ENCODE measurements at regions of chr15 and their contacts with region 1.

Region 1: GRCh38 chr15:88620995-88621772 is at the start of gene AEN:
- DNase-seq: peak; percentile 95
- ATAC-seq: peak; percentile 88
- H3K4me3 Mint-ChIP-seq: peak within 1 kb of the TSS; percentile 85
- H3K27ac Mint-ChIP-seq: peak within 1 kb of the TSS; percentile 89
- H3K4me1 Mint-ChIP-seq: peaks cover 35% of the 10 kb centered on the region
- H3K27me3 Mint-ChIP-seq: peaks cover 3% of the 10 kb centered on the region
- CTCF ChIP-seq: no peak
- total RNA-seq, gene AEN: 55.2 to 58.4 TPM

Region 2: DNA sequence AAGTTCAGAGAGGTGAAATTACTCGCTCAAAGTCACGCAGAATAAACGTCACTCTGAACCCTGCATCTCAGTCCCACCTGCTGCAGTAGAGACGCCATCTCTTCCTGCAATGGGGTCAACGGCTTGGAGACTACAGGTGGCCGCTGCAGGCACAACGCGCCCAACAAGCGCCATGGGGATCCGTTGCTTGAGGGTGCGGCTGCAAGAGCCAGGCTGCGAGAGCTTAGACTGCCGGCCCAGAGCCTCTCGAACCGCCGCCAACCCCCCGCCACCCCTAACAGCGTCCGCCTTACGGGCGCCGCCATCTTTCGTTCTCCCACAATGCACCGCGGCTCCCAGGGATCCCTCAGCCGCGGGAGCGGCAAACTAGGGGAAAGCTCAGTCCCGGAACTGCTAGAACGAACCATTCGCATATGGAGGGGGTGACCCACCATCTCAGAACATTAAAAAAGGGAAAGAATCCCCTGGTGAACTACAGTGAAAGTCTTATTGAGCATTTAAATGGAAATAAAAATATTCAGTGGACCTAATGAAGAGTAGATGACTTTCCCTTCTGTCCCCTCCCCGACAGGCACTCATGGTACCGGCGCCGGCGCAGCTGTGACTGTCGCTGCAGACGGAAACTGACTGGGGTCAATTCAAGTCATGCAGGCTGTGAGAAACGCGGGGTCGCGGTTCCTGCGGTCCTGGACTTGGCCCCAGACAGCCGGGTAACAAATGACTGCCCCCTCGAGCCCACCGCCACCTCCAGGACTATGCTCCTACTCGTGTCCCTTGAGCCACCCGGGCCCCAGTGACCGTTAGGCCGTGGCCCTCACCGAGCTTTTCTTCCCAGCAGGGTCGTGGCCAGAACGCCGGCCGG is 153.9 kb before region 1 on chr15 and contains the starts of genes MRPL46 and MRPS11:
- CTCF ChIA-PET with region 1: interaction called, 3 read pairs
- POLR2A ChIA-PET with region 1: interaction called, 5 read pairs
- intact Hi-C with region 1: loop called (anchors 5 kb)
- DNase-seq: peak; percentile 92
- ATAC-seq: peak; percentile 90
- H3K4me3 Mint-ChIP-seq: peak within 1 kb of the TSS; percentile 90
- H3K27ac Mint-ChIP-seq: peak within 1 kb of the TSS; percentile 99
- H3K4me1 Mint-ChIP-seq: peaks cover 34% of the 10 kb centered on the region
- H3K27me3 Mint-ChIP-seq: no peaks in the 10 kb centered on the region
- CTCF ChIP-seq: no peak
- total RNA-seq, gene MRPL46: 34.4 to 35.0 TPM
- total RNA-seq, gene MRPS11: 54.3 to 55.4 TPM

Region 3: GRCh38 chr15:88546248-88547129 is 74.7 kb before region 1 on chr15 and contains the start of gene DET1:
- CTCF ChIA-PET with region 1: no interaction called
- POLR2A ChIA-PET with region 1: no interaction called
- intact Hi-C with region 1: loop called (anchors 5 kb)
- DNase-seq: peak; percentile 98
- ATAC-seq: peak; percentile 97
- H3K4me3 Mint-ChIP-seq: peak within 1 kb of the TSS; percentile 87
- H3K27ac Mint-ChIP-seq: peak within 1 kb of the TSS; percentile 94
- H3K4me1 Mint-ChIP-seq: peaks cover 14% of the 10 kb centered on the region
- H3K27me3 Mint-ChIP-seq: no peaks in the 10 kb centered on the region
- CTCF ChIP-seq: peak; percentile 74
- total RNA-seq, gene DET1: 2.1 to 2.6 TPM

Region 4: GRCh38 chr15:88603885-88604284 is 17.3 kb before region 1 on chr15:
- CTCF ChIA-PET with region 1: no interaction called
- POLR2A ChIA-PET with region 1: no interaction called
- intact Hi-C with region 1: no loop called
- DNase-seq: no peak
- ATAC-seq: no peak
- H3K4me3 Mint-ChIP-seq: no peak overlapping the region
- H3K27ac Mint-ChIP-seq: no peak overlapping the region
- H3K4me1 Mint-ChIP-seq: peaks cover 16% of the 10 kb centered on the region
- H3K27me3 Mint-ChIP-seq: peaks cover 52% of the 10 kb centered on the region
- CTCF ChIP-seq: no peak

Region 5: DNA sequence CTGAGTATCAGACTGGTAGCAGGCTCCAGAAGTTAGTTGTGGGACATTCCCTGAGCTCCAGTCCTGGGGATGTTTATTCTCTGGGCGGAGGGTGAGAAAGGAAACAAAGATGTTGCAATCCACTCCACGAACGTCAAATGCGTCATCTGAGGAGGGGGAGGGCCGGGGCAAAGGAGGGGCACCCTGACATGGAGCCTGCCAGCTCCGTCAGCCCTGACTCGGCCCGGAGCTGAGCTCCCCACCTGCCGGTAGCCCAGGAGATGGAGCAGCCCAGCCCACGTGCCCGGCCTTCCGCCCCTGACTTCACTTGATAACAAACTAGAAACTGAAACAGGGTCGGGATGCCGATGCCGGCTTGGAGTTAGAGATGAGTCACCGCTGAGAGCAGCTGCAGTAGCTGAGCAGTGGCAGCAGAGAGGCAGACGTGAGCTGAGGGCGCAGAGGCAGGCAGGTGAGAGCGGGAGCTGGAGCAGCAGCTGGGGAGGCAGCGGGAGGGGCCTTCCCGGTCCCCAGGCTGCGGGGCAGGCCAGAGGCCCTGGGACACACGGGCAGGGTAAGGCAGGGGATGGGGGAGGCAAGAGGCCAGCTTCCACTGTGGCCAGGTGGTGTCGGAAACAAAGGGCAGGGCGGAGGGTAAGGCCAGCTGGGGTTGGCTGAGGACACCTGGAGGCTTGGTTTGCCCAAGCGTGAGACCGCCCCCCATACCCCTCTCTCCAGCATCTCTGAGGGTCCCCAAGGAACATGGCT is 17.6 kb after region 1 on chr15 and contains the start of gene ISG20:
- CTCF ChIA-PET with region 1: interaction called, 30 read pairs
- POLR2A ChIA-PET with region 1: interaction called, 16 read pairs
- intact Hi-C with region 1: no loop called
- DNase-seq: peak; percentile 99
- ATAC-seq: peak; percentile 82
- H3K4me3 Mint-ChIP-seq: peak within 1 kb of the TSS; percentile 82
- H3K27ac Mint-ChIP-seq: peak within 1 kb of the TSS; percentile 96
- H3K4me1 Mint-ChIP-seq: peaks cover 81% of the 10 kb centered on the region
- H3K27me3 Mint-ChIP-seq: no peaks in the 10 kb centered on the region
- CTCF ChIP-seq: peak; percentile 47
- total RNA-seq, gene ISG20: 75.1 to 82.8 TPM

Region 6: DNA sequence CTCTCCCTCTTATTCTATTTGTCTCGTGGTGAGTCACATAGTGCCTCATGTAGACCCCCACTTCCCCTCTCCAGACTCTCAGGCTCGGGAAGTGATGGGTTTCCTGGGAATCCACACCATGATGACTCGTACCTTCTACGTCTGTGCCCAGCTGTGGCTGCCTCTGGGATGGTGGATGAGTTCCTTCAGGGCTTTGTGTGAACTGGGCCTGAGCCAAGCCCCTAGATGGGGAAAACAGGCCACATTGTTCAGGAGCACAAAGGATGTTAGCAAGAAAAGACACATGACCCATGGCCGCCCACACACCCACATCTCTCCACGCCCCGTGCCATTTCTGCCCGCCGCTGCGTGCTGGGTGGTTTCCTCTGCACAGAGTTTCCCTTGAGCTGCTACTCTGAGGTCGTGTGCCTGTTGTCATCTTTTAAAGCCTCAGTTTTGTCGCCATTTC is 28.1 kb after region 1 on chr15:
- CTCF ChIA-PET with region 1: interaction called, 24 read pairs
- POLR2A ChIA-PET with region 1: interaction called, 9 read pairs
- intact Hi-C with region 1: no loop called
- DNase-seq: peak; percentile 95
- ATAC-seq: peak; percentile 86
- H3K4me3 Mint-ChIP-seq: peak overlapping the region; percentile 73
- H3K27ac Mint-ChIP-seq: peak overlapping the region; percentile 98
- H3K4me1 Mint-ChIP-seq: peaks cover 74% of the 10 kb centered on the region
- H3K27me3 Mint-ChIP-seq: no peaks in the 10 kb centered on the region
- CTCF ChIP-seq: no peak

Region 7: DNA sequence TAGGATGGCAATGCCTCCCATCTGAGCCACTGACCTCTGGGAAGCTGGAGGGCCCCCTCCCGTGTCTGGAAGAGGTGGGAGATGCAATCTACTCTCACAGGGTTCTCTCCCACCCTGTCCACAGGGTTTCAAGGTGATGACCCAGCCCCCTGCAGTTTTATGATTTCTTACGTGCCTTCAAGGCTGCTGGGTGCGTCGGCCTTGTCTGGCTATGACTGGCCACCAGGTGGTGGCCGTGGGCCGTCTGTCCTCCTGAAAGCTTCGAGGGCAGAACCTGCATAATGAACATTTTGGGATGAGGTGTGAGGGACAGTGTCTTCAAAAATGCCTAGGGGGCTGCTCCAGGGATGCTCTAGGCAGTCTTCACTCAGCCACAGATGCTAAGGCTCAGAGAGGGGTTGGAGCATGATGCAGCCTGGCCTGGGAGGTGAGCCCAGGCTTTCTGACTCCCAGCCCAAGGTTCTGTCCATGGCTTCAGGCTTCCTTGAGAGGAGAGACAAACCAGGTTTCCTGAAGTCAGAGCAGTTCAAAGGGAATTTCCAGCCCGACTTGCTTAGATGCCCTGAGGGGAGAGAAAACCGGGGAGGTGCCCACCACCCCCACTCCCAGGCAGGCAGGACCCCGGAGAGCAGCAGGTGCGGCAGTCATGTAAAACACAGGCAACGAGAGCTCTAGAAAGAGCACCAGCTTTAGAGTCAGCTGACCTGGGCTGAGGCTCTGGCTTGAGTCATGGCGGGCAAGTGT is 36.3 kb after region 1 on chr15:
- CTCF ChIA-PET with region 1: interaction called, 37 read pairs
- POLR2A ChIA-PET with region 1: interaction called, 11 read pairs
- intact Hi-C with region 1: loop called (anchors 5 kb)
- DNase-seq: no peak
- ATAC-seq: peak; percentile 34
- H3K4me3 Mint-ChIP-seq: no peak overlapping the region
- H3K27ac Mint-ChIP-seq: peak overlapping the region; percentile 43
- H3K4me1 Mint-ChIP-seq: peaks cover 73% of the 10 kb centered on the region
- H3K27me3 Mint-ChIP-seq: no peaks in the 10 kb centered on the region
- CTCF ChIP-seq: peak; percentile 27

Region 8: GRCh38 chr15:88664151-88664778 is 43.1 kb after region 1 on chr15:
- CTCF ChIA-PET with region 1: interaction called, 42 read pairs
- POLR2A ChIA-PET with region 1: interaction called, 5 read pairs
- intact Hi-C with region 1: loop called (anchors 5 kb)
- DNase-seq: peak; percentile 75
- ATAC-seq: peak; percentile 88
- H3K4me3 Mint-ChIP-seq: no peak overlapping the region
- H3K27ac Mint-ChIP-seq: peak overlapping the region; percentile 7
- H3K4me1 Mint-ChIP-seq: peaks cover 28% of the 10 kb centered on the region
- H3K27me3 Mint-ChIP-seq: peaks cover 3% of the 10 kb centered on the region
- CTCF ChIP-seq: peak; percentile 55

Measured in activated CD8-positive, alpha-beta T cell treated with anti-CD3 and anti-CD28 coated beads for 36 hours (primary cell).